ENCODE measurements at regions of chr17 and their contacts with region 1.

Region 1: DNA sequence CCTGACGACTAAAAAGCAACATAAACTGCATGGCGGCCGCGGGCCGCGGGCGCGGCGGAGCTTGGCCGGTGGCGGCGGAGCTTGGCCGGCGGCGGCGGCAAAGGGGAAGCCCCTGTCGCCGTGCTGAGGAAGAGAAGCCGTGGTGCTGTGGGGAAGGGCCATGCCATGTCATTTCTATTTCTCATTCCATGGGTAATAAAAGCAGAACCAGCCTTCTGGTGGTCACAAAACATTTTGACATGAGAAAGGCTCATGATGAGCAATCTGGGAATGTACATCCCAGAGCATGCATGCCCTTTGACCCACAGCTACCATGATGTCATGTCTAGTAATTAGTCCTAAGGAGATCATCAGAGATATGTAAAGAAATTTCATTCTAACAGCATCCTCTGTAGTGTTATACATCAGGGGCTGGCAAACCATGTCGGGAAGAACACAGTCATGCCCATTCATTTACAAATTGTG is 23.9 kb upstream of the HEATR6 start:
- DNase-seq: peak in 3 of 5 donors; percentile 24 to 45 (median 32)
- ATAC-seq: peak in 3 of 4 donors; percentile 57 to 77 (median 60)
- H3K4me3 ChIP-seq: peak overlapping the region in 10 of 12 donors; percentile 16 to 50 (median 40)
- H3K27ac ChIP-seq: peak overlapping the region in 5 of 12 donors; percentile 17 to 71 (median 20)
- H3K4me1 ChIP-seq: peaks cover 0 to 9% (median 0%) of the 10 kb centered on the region in 12 donors
- H3K27me3 ChIP-seq: no peaks in the 10 kb centered on the region
- CTCF ChIP-seq: no peak
- POLR2A ChIP-seq: no peak

Region 2: DNA sequence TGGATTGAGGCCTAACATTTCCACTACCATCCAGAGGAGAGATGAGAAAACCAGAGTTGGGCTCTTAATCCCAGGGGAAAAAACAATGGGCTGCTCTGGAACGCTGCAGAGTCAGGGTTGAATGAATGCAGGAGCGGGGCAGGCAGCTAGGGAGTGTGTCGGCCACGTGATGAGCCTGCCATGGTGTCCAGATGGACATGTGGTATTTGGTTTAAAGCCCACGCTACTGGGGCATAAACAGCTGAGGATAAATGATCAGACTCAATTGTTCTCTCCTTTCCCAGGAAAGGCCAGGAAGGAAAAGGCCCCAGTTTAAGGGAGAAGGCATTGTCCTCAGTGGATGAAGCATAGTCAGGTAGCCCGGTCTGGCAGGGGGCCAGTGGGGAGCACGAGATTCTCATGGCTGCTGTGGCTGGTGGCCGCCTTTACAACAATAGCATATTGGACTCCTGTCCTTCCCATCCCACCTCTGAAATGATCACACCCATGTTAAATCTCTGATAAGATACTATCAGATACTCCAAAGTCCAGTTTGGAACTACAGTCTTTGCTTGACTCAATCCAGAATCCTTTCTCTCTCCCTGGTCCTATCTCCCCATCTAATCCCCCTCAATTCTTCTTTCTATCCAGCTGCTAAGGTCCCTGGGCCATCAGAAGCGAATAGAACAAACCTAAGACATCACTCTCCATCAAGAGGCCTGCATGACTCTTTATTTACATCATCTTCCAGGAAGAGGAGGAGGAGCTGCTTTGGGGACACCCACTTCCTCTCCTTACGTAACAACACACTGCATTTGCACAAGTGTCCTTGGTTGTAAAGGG is 67.5 kb after region 1 on chr17:
- intact Hi-C with region 1: no loop called
- DNase-seq: peak; percentile 64 to 82 (median 78)
- ATAC-seq: peak; percentile 49 to 85 (median 68)
- H3K4me3 ChIP-seq: no peak overlapping the region
- H3K27ac ChIP-seq: peak overlapping the region in 10 of 12 donors; percentile 12 to 82 (median 65)
- H3K4me1 ChIP-seq: peaks cover 0 to 69% (median 24%) of the 10 kb centered on the region in 12 donors
- H3K27me3 ChIP-seq: no peaks in the 10 kb centered on the region
- CTCF ChIP-seq: no peak
- POLR2A ChIP-seq: no peak

Region 3: GRCh38 chr17:60442271-60443173 is 339.9 kb after region 1 on chr17:
- intact Hi-C with region 1: loop called in 8 of 10 experiments (anchors 10 kb)
- DNase-seq: no peak
- ATAC-seq: peak in 2 of 4 donors; percentile 31 to 47
- H3K4me3 ChIP-seq: no peak overlapping the region
- H3K27ac ChIP-seq: peak overlapping the region in 7 of 12 donors; percentile 9 to 52 (median 36)
- H3K4me1 ChIP-seq: peaks cover 0 to 17% (median 0%) of the 10 kb centered on the region in 12 donors
- H3K27me3 ChIP-seq: no peaks in the 10 kb centered on the region
- CTCF ChIP-seq: no peak
- POLR2A ChIP-seq: no peak